HEK293T (cell line): ENCODE measurements at regions of chr13 and their contacts with region 1.

Region 1: GRCh38 chr13:72565893-72566292 is 161.5 kb downstream of the MZT1 start:
- DNase-seq: peak; percentile 53

Region 2: DNA sequence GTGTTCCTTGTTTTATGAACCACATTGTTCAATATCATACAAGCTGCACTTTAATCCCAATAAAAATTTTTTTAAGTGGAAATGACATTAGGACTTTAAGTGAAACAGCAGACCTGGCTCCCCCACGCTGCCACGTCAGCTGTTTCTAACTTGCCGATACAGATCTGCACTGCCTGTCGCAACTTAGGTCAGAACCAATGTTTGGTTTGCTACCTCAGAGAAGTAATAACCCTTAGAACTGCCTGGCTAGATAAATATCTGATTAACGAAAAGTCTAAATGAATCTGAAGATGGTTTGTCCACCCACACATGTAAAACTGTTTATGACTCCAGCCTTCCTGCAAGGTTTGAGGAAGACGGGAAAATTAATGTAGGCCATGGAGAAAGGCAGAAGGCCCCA is 371.3 kb before region 1 on chr13:
- CTCF ChIA-PET with region 1: interaction called, 11 read pairs
- POLR2A ChIA-PET with region 1: no interaction called
- DNase-seq: peak; percentile 60

Region 3: GRCh38 chr13:72552731-72553130 is 13.2 kb before region 1 on chr13:
- CTCF ChIA-PET with region 1: interaction called, 10 read pairs
- POLR2A ChIA-PET with region 1: no interaction called
- DNase-seq: no peak

Region 4: DNA sequence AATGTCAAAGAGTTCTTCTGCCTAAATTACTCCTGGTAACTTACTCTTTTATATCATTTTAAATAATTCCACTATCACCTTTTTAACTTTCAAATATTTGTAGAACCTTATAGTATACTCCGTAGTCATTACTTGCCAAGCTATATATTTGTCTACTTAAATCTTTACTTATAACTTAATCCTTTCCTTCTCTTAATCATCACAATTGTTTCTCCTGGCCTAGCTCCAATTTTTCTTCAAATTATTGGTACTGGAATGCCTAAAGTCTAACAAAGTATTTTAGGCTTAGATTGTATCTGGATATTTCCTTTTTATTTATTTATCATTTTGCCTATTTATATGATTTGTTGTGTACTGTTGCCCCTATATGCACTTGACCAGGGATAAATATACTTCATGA is 52.1 kb after region 1 on chr13:
- CTCF ChIA-PET with region 1: no interaction called
- POLR2A ChIA-PET with region 1: no interaction called
- DNase-seq: no peak